OCI-LY7 (cell line): ENCODE measurements at regions of chr3 and their contacts with region 1.

Region 1: DNA sequence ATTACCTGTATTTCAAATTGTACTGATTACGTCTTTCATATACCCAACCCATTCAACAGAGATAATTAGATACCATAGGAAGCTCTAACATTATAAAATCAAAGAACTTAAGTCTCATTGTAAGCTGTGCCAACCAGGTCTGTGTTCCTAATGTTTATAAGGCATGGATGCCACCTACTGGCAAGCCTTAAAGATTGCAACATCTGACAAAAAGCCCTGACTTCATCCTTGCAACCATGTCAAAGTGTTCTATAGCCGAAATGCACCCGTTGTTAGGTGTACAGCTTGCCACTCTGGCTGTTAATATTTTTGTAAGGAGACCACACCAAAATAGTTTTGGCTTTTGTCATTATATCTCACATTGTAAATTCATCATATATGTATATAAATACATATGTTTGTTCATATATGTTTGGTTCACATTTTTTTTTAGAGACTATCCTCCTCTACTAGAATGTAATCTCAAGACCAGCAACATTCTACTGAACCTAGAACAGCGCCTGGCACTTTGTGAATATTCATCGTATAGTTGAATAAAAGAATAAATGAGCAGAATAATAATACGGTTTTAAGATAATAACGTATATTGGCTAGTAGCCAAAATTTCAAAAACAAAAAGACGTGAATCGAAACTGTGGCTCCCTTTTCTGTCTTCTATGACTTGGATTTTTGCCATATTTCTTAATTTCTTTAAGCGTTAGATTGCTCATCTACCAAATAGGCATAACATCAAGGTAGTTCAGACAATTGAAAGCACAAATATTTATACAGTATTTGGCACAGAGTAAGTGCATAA is 258.1 kb downstream of the TBL1XR1 start:
- DNase-seq: peak; percentile 79
- H3K4me3 ChIP-seq: no peak overlapping the region
- H3K27ac ChIP-seq: no peak overlapping the region
- H3K4me1 ChIP-seq: no peaks in the 10 kb centered on the region
- CTCF ChIP-seq: peak; percentile 92

Region 2: GRCh38 chr3:176514297-176514696 is 424.9 kb before region 1 on chr3:
- CTCF ChIA-PET with region 1: no interaction called
- POLR2A ChIA-PET with region 1: no interaction called
- intact Hi-C with region 1: loop called (anchors 2 kb)
- DNase-seq: peak; percentile 60
- H3K4me3 ChIP-seq: no peak overlapping the region
- H3K27ac ChIP-seq: no peak overlapping the region
- H3K4me1 ChIP-seq: no peaks in the 10 kb centered on the region
- CTCF ChIP-seq: peak; percentile 79

Region 3: GRCh38 chr3:176872771-176873209 is 66.4 kb before region 1 on chr3:
- CTCF ChIA-PET with region 1: no interaction called
- POLR2A ChIA-PET with region 1: interaction called, 8 read pairs
- intact Hi-C with region 1: loop called (anchors 1 kb)
- DNase-seq: peak; percentile 69
- H3K4me3 ChIP-seq: no peak overlapping the region
- H3K27ac ChIP-seq: no peak overlapping the region
- H3K4me1 ChIP-seq: no peaks in the 10 kb centered on the region
- CTCF ChIP-seq: peak; percentile 88

Region 4: GRCh38 chr3:176920766-176921160 is 18.5 kb before region 1 on chr3:
- CTCF ChIA-PET with region 1: no interaction called
- POLR2A ChIA-PET with region 1: no interaction called
- intact Hi-C with region 1: no loop called
- DNase-seq: no peak
- H3K4me3 ChIP-seq: no peak overlapping the region
- H3K27ac ChIP-seq: no peak overlapping the region
- H3K4me1 ChIP-seq: no peaks in the 10 kb centered on the region
- CTCF ChIP-seq: no peak

Region 5: DNA sequence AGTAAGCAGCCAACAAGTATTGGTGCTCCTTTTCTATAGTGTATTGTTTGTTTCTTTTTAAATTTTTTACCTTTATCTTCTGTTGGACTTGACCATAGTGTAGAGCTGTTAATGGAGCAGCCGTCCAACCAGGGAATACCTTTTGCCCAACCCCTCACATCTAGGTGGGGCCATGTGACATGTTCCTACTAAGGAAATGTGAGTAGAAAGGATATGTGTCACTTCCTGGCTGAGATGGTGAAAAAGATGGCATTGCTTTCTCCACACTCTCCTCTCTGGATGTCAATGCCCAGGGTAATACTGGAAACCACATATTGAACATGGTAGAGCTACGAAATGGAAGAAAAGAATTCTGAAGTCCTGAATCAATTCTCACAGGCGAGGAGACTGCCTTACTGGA is 39.2 kb after region 1 on chr3:
- CTCF ChIA-PET with region 1: no interaction called
- POLR2A ChIA-PET with region 1: no interaction called
- intact Hi-C with region 1: no loop called
- DNase-seq: no peak
- H3K4me3 ChIP-seq: no peak overlapping the region
- H3K27ac ChIP-seq: no peak overlapping the region
- H3K4me1 ChIP-seq: no peaks in the 10 kb centered on the region
- CTCF ChIP-seq: no peak